Left cardiac atrium (tissue), 4 donors: ENCODE measurements at regions of chr3 and their contacts with region 1.

Region 1: GRCh38 chr3:69691860-69692259 is 47.4 kb upstream of the MITF start:
- DNase-seq: no peak
- ATAC-seq: no peak

Region 2: DNA sequence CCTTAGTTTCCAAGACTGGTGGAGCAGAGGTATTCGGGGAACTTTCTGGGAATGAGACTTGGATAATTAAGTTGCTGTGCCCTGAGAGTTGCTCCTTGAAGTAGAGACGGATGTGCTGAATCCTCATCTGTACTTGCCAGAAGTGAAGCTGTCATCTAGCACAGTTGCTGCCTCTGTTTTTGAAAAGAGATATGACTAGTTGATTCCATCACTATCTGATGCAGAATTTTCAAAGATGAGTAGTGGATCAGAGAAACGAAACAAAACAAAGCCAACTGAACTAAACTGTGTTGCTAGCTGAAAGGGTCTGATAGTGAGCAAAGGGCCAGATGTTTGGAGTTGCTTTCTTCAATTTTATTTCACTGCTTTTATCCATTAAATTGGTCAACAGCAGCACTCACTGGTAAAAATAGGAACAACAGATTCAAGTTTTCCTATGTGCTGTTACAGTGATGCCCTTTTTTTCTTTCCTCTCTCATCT is 100.1 kb after region 1 on chr3:
- intact Hi-C with region 1: loop called (anchors 5 to 10 kb)
- DNase-seq: no peak
- ATAC-seq: peak; percentile 65 to 77

Region 3: GRCh38 chr3:69855436-69856162 is 163.7 kb after region 1 on chr3:
- intact Hi-C with region 1: loop called (anchors 10 kb)
- DNase-seq: no peak
- ATAC-seq: peak; percentile 62 to 70